Ascending aorta (tissue), 2 donors: ENCODE measurements at regions of chr11 and their contacts with region 1.

Region 1: DNA sequence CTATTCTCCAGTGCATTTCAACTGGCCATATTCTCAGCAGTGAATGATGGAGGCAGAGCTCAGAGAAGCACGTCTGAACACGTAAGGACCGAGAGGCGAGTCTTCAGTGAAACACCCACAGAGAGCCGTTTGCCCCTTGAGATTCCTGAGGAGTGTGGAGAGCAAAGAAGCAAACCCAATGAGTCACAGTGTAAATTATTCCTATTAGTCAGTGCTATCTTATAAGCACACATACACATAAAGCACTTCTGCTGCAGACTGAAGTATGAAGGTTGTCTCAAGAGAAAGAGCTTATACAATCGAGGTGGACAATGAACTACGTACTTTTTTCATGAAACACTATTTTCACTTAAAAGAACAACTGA is 37.4 kb downstream of the GALNT18 start:
- DNase-seq: no peak
- H3K4me3 ChIP-seq: no peak overlapping the region
- H3K27ac ChIP-seq: peak overlapping the region; percentile 30 to 81
- H3K4me1 ChIP-seq: peaks cover 10 to 51% of the 10 kb centered on the region in 2 donors
- H3K27me3 ChIP-seq: no peaks in the 10 kb centered on the region
- CTCF ChIP-seq: no peak

Region 2: GRCh38 chr11:11502263-11502861 is 82.1 kb before region 1 on chr11:
- intact Hi-C with region 1: loop called (anchors 5 kb)
- DNase-seq: no peak
- H3K4me3 ChIP-seq: no peak overlapping the region
- H3K27ac ChIP-seq: peak overlapping the region; percentile 79 to 81
- H3K4me1 ChIP-seq: peaks cover 14 to 25% of the 10 kb centered on the region in 2 donors
- H3K27me3 ChIP-seq: no peaks in the 10 kb centered on the region
- CTCF ChIP-seq: no peak

Region 3: DNA sequence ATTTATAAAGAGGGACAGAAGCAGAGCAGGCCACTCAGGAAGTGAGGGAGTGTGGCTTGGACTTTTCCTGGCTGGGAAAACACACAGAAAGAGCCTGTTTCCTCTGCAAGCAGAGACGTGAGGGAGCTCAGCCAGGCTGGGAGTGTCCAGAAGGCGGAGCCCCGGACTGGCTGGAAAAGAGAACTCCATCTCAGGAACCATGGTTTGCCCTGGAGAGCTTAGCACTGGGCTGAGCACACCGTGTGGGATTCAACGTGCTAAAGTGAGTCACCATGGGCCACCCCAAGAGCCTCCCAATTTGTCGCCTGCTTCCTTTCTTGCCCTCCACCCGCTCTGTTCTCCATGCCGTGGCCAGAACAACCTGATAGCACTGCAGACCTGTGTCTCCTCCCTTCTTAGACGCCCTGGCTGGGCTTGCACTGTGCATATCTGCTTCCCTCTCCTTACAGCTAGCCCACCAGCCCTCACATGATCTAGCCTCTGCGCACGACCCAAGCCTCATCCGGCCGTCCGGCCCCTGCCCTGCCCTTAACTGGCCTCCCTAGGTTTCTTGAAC is 14.4 kb before region 1 on chr11:
- intact Hi-C with region 1: loop called (anchors 1 kb)
- DNase-seq: peak; percentile 64 to 92
- H3K4me3 ChIP-seq: peak overlapping the region in 1 of 2 donors; percentile 47
- H3K27ac ChIP-seq: peak overlapping the region; percentile 72 to 78
- H3K4me1 ChIP-seq: peaks cover 18 to 28% of the 10 kb centered on the region in 2 donors
- H3K27me3 ChIP-seq: no peaks in the 10 kb centered on the region
- CTCF ChIP-seq: peak in 1 of 3 experiments; percentile 16

Region 4: DNA sequence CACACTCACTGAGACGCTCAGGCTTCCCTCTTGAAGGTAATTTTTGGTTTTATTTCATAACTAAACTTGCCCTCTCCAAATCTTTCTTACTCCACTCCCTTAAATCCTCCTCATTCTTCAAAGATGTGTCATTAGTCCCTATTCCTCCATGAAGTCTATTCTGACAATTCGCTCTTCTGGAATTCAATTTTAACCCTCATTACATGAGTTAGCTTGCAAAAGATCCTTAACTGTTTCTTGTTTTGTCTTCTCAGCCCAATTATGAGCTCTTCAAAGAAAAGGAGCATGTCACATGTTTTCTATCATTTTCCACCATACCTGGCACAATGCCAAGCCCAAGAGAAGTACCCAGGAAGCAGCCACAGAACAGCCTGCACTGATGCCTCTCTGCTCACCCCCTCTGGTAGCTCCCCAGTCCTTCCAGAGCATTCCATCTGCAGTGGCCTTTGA is 24.4 kb after region 1 on chr11:
- intact Hi-C with region 1: loop called (anchors 2 kb)
- DNase-seq: no peak
- H3K4me3 ChIP-seq: no peak overlapping the region
- H3K27ac ChIP-seq: peak overlapping the region in 1 of 2 donors; percentile 34
- H3K4me1 ChIP-seq: peaks cover 11 to 16% of the 10 kb centered on the region in 2 donors
- H3K27me3 ChIP-seq: no peaks in the 10 kb centered on the region
- CTCF ChIP-seq: no peak

Region 5: DNA sequence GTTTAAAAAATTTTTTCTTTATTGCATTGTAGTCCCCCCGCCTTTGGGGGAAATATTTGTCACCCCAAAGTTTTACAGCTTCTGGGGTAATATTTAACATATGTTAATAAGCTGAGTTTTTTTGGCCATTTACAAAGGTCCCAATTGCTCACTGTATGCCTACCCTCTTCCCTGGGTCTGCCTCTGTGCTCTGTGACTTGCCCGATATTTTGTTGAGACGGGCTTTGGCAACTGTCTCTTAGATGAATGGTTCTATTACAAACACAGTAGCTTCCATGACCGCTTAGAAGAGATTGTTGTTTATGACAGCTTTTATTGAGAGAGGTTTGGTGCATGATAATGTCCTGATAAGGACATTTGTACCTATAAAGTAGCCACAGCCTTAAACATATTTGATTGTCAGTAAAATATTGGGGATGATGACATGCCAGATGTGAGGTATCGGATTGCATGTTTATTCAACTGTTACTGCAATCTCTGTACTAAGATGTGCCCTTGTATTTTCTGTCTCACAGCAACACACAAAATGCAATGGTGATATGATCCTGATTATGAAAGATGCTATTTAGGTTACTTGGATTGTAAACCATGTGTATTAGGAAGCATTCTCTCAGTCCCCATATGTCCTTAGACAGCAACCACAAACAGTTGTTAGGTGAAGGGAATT is 1192.9 kb after region 1 on chr11:
- intact Hi-C with region 1: no loop called
- DNase-seq: no peak
- H3K4me3 ChIP-seq: no peak overlapping the region
- H3K27ac ChIP-seq: no peak overlapping the region
- H3K4me1 ChIP-seq: no peaks in the 10 kb centered on the region
- H3K27me3 ChIP-seq: no peaks in the 10 kb centered on the region
- CTCF ChIP-seq: no peak